ENCODE measurements at regions of chr1 and their contacts with region 1.

Region 1: DNA sequence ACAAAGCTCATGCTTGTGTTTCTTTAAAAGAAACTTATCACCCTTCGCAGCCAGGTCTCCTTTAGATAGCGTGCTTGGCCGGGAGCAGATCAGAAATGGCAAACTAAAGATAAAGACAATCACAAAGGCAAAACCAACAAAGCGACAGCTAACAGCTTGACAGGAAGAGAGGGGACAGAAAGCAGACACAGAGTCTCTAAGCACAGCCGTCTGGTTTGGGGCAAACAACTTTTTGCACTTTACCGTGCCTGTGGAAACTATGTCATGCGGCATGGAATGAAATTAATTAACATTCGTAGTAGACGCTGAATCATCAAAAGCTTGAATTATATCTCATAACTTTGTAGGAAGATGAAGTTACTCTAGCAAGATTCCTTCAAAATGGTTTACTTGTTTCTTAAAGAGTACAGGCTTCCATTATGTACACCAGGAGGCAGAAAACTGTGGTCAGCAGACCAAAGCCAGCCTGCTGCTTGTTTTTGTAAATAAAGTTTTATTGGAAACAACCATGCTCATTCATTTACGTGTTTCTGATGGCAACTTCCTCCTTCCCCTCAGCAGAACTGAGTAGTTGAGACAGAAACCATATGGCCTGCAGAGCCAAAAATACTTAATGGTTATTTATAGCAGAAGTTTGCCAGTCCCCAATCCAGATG is 183.2 kb downstream of the KIF26B start:
- DNase-seq: peak in 1 of 5 donors; percentile 32
- ATAC-seq: peak; percentile 78 to 93 (median 88)
- H3K4me3 ChIP-seq: peak overlapping the region in 1 of 12 donors; percentile 10
- H3K27ac ChIP-seq: peak overlapping the region in 9 of 12 donors; percentile 12 to 65 (median 47)
- H3K4me1 ChIP-seq: peaks cover 0 to 5% (median 0%) of the 10 kb centered on the region in 12 donors
- H3K27me3 ChIP-seq: no peaks in the 10 kb centered on the region
- CTCF ChIP-seq: no peak
- POLR2A ChIP-seq: no peak

Region 2: GRCh38 chr1:245225322-245226202 is 112.4 kb before region 1 on chr1:
- intact Hi-C with region 1: no loop called
- DNase-seq: no peak
- ATAC-seq: no peak
- H3K4me3 ChIP-seq: no peak overlapping the region
- H3K27ac ChIP-seq: no peak overlapping the region
- H3K4me1 ChIP-seq: no peaks in the 10 kb centered on the region
- H3K27me3 ChIP-seq: peaks cover 0 to 16% (median 0%) of the 10 kb centered on the region in 9 donors
- CTCF ChIP-seq: no peak
- POLR2A ChIP-seq: no peak

Region 3: GRCh38 chr1:245797592-245798348 is 459.8 kb after region 1 on chr1:
- intact Hi-C with region 1: loop called in 1 of 10 experiments (anchors 10 kb)
- DNase-seq: no peak
- ATAC-seq: no peak
- H3K4me3 ChIP-seq: no peak overlapping the region
- H3K27ac ChIP-seq: no peak overlapping the region
- H3K4me1 ChIP-seq: no peaks in the 10 kb centered on the region
- H3K27me3 ChIP-seq: no peaks in the 10 kb centered on the region
- CTCF ChIP-seq: peak in 7 of 12 donors; percentile 6 to 33 (median 20)
- POLR2A ChIP-seq: no peak

Measured in heart left ventricle (tissue), 16 donors.